ENCODE measurements at regions of chr3 and their contacts with region 1.

Region 1: GRCh38 chr3:63343674-63344073 is 65.6 kb downstream of the SYNPR start:
- DNase-seq: peak; percentile 96
- H3K4me3 ChIP-seq: no peak overlapping the region
- H3K27ac ChIP-seq: peak overlapping the region; percentile 92
- H3K4me1 ChIP-seq: peaks cover 28% of the 10 kb centered on the region
- H3K27me3 ChIP-seq: no peaks in the 10 kb centered on the region
- CTCF ChIP-seq: no peak

Region 2: GRCh38 chr3:63279005-63279878 is 64.4 kb before region 1 on chr3:
- CTCF ChIA-PET with region 1: no interaction called
- POLR2A ChIA-PET with region 1: no interaction called
- intact Hi-C with region 1: loop called (anchors 5 kb)
- DNase-seq: peak; percentile 14
- H3K4me3 ChIP-seq: peak overlapping the region; percentile 60
- H3K27ac ChIP-seq: no peak overlapping the region
- H3K4me1 ChIP-seq: no peaks in the 10 kb centered on the region
- H3K27me3 ChIP-seq: no peaks in the 10 kb centered on the region
- CTCF ChIP-seq: no peak